ENCODE measurements at regions of chr15 and their contacts with region 1.

Region 1: GRCh38 chr15:91942676-91943576 is 89.4 kb downstream of the SLCO3A1 start:
- DNase-seq: peak; percentile 91
- H3K4me3 ChIP-seq: no peak overlapping the region
- H3K27ac ChIP-seq: peak overlapping the region; percentile 25 to 58
- H3K4me1 ChIP-seq: peaks cover 10% of the 10 kb centered on the region
- H3K27me3 ChIP-seq: no peaks in the 10 kb centered on the region
- CTCF ChIP-seq: no peak
- POLR2A ChIP-seq: no peak

Region 2: DNA sequence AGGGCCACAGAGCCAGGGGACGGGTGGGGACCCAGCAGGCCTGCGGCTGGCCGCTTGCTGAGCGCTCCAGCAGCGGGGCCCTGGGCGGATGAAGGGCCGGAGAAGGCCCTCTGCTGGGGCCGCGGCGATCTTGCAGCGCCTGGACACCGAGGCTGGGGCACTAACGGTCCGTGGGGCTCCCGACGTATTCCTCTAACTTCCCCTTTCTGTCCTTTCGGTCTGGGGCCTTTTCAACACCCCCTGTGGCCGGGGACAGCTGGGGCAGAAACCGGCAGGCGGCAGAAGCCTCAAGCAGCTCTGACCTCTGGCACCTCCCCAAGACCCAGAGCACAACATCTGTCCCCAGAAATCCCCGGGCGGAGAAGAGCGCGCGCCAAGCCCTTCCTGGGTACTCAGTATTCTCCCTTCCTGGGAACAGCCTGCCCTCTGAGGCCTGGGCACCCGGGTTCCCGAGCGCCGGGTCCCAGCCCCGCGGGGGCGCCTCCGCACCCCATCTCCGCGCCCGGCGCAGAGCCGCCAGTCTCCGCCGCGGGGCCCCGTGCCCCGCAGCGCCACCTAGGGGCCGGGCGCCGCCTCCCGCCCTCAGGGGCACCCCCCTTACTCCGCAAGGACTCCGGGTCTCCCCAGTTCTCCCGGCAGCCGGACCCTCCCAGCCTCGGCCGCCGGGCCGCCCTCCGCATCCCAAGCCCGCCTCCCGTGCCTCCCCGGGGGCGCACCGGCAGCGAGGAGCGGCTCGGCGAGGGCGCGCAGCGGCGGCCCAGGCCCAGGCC is 90.0 kb before region 1 on chr15:
- intact Hi-C with region 1: loop called (anchors 5 kb)
- DNase-seq: peak; percentile 57
- H3K4me3 ChIP-seq: peak overlapping the region; percentile 49 to 60
- H3K27ac ChIP-seq: peak overlapping the region; percentile 83
- H3K4me1 ChIP-seq: no peaks in the 10 kb centered on the region
- H3K27me3 ChIP-seq: no peaks in the 10 kb centered on the region
- CTCF ChIP-seq: peak; percentile 67 to 88 (median 80)
- POLR2A ChIP-seq: no peak

Measured in prostate gland (tissue), 2 donors.